Mammary epithelial cell (primary cell): ENCODE measurements at regions of chr15 and their contacts with region 1.

Region 1: DNA sequence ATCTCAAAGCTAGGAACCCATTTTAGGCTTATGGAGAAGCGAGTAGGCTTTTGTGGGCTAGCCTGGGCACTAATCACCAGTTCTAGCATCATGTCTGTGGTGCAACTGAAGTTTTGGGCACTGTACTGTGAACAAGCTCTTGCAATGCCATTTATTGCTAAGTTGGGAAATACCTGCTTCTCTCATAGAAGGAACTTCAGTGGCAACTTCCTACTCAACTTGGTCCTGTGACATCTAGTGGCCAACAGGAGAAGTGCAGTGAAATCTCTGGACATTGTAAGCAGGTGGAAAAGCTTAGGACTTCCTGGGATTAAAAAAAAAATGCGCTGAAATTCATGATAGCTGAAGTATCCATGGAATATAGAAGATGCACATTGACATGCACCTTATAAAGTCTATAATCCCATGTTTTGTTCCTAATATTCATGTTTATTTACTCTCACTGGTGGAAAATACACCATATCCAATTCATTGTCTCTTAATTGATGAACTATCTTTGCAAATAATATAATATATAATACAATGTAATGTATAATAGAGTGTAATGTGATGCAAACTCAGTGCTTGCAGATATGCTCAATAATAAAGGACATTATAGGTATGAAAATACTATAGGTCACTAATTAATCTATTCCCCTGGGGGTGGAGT is 6.5 kb upstream of the ALDH1A3 start:
- DNase-seq: peak; percentile 85
- H3K4me3 ChIP-seq: no peak overlapping the region
- H3K27ac ChIP-seq: no peak overlapping the region
- H3K4me1 ChIP-seq: peaks cover 13% of the 10 kb centered on the region
- H3K27me3 ChIP-seq: no peaks in the 10 kb centered on the region
- CTCF ChIP-seq: peak; percentile 89 to 92

Region 2: GRCh38 chr15:100279446-100279845 is 593.7 kb before region 1 on chr15:
- CTCF ChIA-PET with region 1: no interaction called
- dilution Hi-C with region 1: no loop called
- in situ Hi-C with region 1: no loop called
- intact Hi-C with region 1: no loop called
- DNase-seq: no peak
- H3K4me3 ChIP-seq: no peak overlapping the region
- H3K27ac ChIP-seq: no peak overlapping the region
- H3K4me1 ChIP-seq: peaks cover 11% of the 10 kb centered on the region
- H3K27me3 ChIP-seq: peaks cover 2% of the 10 kb centered on the region
- CTCF ChIP-seq: no peak

Region 3: GRCh38 chr15:100349696-100350433 is 523.3 kb before region 1 on chr15:
- CTCF ChIA-PET with region 1: interaction called, 3 read pairs
- dilution Hi-C with region 1: no loop called
- in situ Hi-C with region 1: no loop called
- intact Hi-C with region 1: loop called (anchors 5 kb)
- DNase-seq: peak; percentile 78
- H3K4me3 ChIP-seq: peak overlapping the region; percentile 46 to 52 (median 48)
- H3K27ac ChIP-seq: peak overlapping the region; percentile 30
- H3K4me1 ChIP-seq: peaks cover 15% of the 10 kb centered on the region
- H3K27me3 ChIP-seq: no peaks in the 10 kb centered on the region
- CTCF ChIP-seq: peak; percentile 82 to 92

Region 4: GRCh38 chr15:100635406-100636071 is 237.6 kb before region 1 on chr15:
- CTCF ChIA-PET with region 1: no interaction called
- dilution Hi-C with region 1: no loop called
- in situ Hi-C with region 1: loop called in 1 of 2 experiments (anchors 10 kb)
- intact Hi-C with region 1: no loop called
- DNase-seq: no peak
- H3K4me3 ChIP-seq: no peak overlapping the region
- H3K27ac ChIP-seq: no peak overlapping the region
- H3K4me1 ChIP-seq: peaks cover 10% of the 10 kb centered on the region
- H3K27me3 ChIP-seq: no peaks in the 10 kb centered on the region
- CTCF ChIP-seq: no peak

Region 5: GRCh38 chr15:100713163-100713867 is 159.8 kb before region 1 on chr15:
- CTCF ChIA-PET with region 1: no interaction called
- dilution Hi-C with region 1: no loop called
- in situ Hi-C with region 1: no loop called
- intact Hi-C with region 1: loop called (anchors 2 kb)
- DNase-seq: peak; percentile 100
- H3K4me3 ChIP-seq: no peak overlapping the region
- H3K27ac ChIP-seq: peak overlapping the region; percentile 99
- H3K4me1 ChIP-seq: peaks cover 33% of the 10 kb centered on the region
- H3K27me3 ChIP-seq: no peaks in the 10 kb centered on the region
- CTCF ChIP-seq: no peak

Region 6: GRCh38 chr15:100849252-100850171 is 23.6 kb before region 1 on chr15:
- CTCF ChIA-PET with region 1: no interaction called
- dilution Hi-C with region 1: no loop called
- in situ Hi-C with region 1: no loop called
- intact Hi-C with region 1: loop called (anchors 1 kb)
- DNase-seq: peak; percentile 33
- H3K4me3 ChIP-seq: peak overlapping the region; percentile 60 to 69 (median 63)
- H3K27ac ChIP-seq: peak overlapping the region; percentile 11
- H3K4me1 ChIP-seq: peaks cover 8% of the 10 kb centered on the region
- H3K27me3 ChIP-seq: no peaks in the 10 kb centered on the region
- CTCF ChIP-seq: peak; percentile 15 to 64

Region 7: GRCh38 chr15:100968050-100968966 is 95.2 kb after region 1 on chr15:
- CTCF ChIA-PET with region 1: interaction called, 23 read pairs
- dilution Hi-C with region 1: no loop called
- in situ Hi-C with region 1: no loop called
- intact Hi-C with region 1: no loop called
- DNase-seq: peak; percentile 46
- H3K4me3 ChIP-seq: no peak overlapping the region
- H3K27ac ChIP-seq: no peak overlapping the region
- H3K4me1 ChIP-seq: no peaks in the 10 kb centered on the region
- H3K27me3 ChIP-seq: no peaks in the 10 kb centered on the region
- CTCF ChIP-seq: no peak